ENCODE measurements at regions of chr4 and their contacts with region 1.

Region 1: GRCh38 chr4:161936625-161937133 is 227.1 kb downstream of the FSTL5 start:
- DNase-seq: no peak
- ATAC-seq: no peak
- H3K4me3 ChIP-seq: no peak overlapping the region
- H3K27ac ChIP-seq: no peak overlapping the region
- H3K4me1 ChIP-seq: no peaks in the 10 kb centered on the region
- H3K27me3 ChIP-seq: no peaks in the 10 kb centered on the region
- CTCF ChIP-seq: no peak
- EP300 ChIP-seq: no peak
- POLR2A ChIP-seq: no peak
- RAD21 ChIP-seq: no peak

Region 2: GRCh38 chr4:161650812-161651211 is 285.9 kb before region 1 on chr4:
- CTCF ChIA-PET with region 1: no interaction called
- POLR2A ChIA-PET with region 1: no interaction called
- RAD21 ChIA-PET with region 1: no interaction called
- SMC1A ChIA-PET with region 1: no interaction called
- in situ Hi-C with region 1: no loop called
- intact Hi-C with region 1: no loop called
- DNase-seq: peak; percentile 8
- ATAC-seq: peak; percentile 83
- H3K4me3 ChIP-seq: no peak overlapping the region
- H3K27ac ChIP-seq: no peak overlapping the region
- H3K4me1 ChIP-seq: no peaks in the 10 kb centered on the region
- H3K27me3 ChIP-seq: no peaks in the 10 kb centered on the region
- CTCF ChIP-seq: no peak
- EP300 ChIP-seq: no peak
- POLR2A ChIP-seq: no peak
- RAD21 ChIP-seq: no peak

Region 3: GRCh38 chr4:161949946-161950725 is 13.5 kb after region 1 on chr4:
- CTCF ChIA-PET with region 1: interaction called, 8 read pairs
- POLR2A ChIA-PET with region 1: no interaction called
- RAD21 ChIA-PET with region 1: interaction called, 5 read pairs
- SMC1A ChIA-PET with region 1: interaction called, 13 read pairs
- in situ Hi-C with region 1: no loop called
- intact Hi-C with region 1: no loop called
- DNase-seq: no peak
- ATAC-seq: no peak
- H3K4me3 ChIP-seq: no peak overlapping the region
- H3K27ac ChIP-seq: no peak overlapping the region
- H3K4me1 ChIP-seq: no peaks in the 10 kb centered on the region
- H3K27me3 ChIP-seq: no peaks in the 10 kb centered on the region
- CTCF ChIP-seq: no peak
- EP300 ChIP-seq: no peak
- POLR2A ChIP-seq: no peak
- RAD21 ChIP-seq: no peak

Measured in GM12878 (cell line).